Activated T-helper 2 cell treated with anti-CD3 and anti-CD28 coated beads, Interferon-gamma antibody, Interleukin-2, Interleukin-4, amounts not matched to agents 10 μg/mL and 5 μg/mL and 100 μg/mL, durations not matched to agents 14 hours and 24 hours and 36 hours (primary cell): ENCODE measurements at regions of chr14 and their contacts with region 1.

Region 1: GRCh38 chr14:89915114-89915878 is 39.2 kb downstream of the EFCAB11 start:
- DNase-seq: peak; percentile 38
- H3K4me3 Mint-ChIP-seq: no peak overlapping the region
- H3K27ac Mint-ChIP-seq: no peak overlapping the region
- H3K4me1 Mint-ChIP-seq: no peaks in the 10 kb centered on the region
- H3K27me3 Mint-ChIP-seq: peaks cover 24% of the 10 kb centered on the region

Region 2: GRCh38 chr14:88667555-88668273 is 1247.6 kb before region 1 on chr14:
- intact Hi-C with region 1: loop called (anchors 5 kb)
- DNase-seq: peak; percentile 22
- H3K4me3 Mint-ChIP-seq: no peak overlapping the region
- H3K27ac Mint-ChIP-seq: no peak overlapping the region
- H3K4me1 Mint-ChIP-seq: no peaks in the 10 kb centered on the region
- H3K27me3 Mint-ChIP-seq: no peaks in the 10 kb centered on the region

Region 3: DNA sequence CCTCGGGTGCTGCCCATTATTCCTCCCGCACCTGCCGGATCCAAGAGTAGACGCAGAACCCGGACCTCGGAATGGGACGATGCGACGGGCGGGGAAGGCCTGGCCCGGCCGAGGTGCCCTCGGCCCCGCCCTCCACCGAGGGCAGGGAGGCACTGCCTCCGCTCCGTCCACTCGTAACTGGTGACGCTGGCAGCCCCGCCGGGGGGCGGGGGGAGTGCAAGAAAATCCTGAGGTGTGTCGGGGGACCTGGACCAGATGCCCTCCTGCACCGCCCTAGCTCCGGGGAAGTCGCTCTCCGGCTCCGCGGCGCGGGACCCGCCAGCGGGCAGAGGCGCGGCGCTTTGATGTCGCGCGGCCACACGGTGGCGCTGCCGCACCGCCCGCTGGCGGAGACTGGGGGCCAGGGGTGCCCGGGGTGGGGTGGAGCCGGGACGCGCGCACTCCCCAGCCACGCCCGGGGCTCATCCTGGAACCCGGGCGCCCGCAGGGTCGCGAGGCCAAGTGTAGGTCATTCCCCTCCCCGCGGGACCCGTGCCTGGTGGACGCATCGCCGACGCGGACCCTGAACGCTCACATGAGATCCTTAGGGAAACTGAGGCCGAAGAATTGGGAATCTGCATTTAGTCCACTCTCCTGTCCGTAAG is 888.1 kb before region 1 on chr14:
- intact Hi-C with region 1: loop called (anchors 1 kb)
- DNase-seq: peak; percentile 44
- H3K4me3 Mint-ChIP-seq: peak overlapping the region; percentile 71
- H3K27ac Mint-ChIP-seq: no peak overlapping the region
- H3K4me1 Mint-ChIP-seq: no peaks in the 10 kb centered on the region
- H3K27me3 Mint-ChIP-seq: peaks cover 56% of the 10 kb centered on the region

Region 4: GRCh38 chr14:89040460-89041259 is 874.6 kb before region 1 on chr14:
- intact Hi-C with region 1: loop called (anchors 1 kb)
- DNase-seq: peak; percentile 68
- H3K4me3 Mint-ChIP-seq: peak overlapping the region; percentile 66
- H3K27ac Mint-ChIP-seq: no peak overlapping the region
- H3K4me1 Mint-ChIP-seq: peaks cover 1% of the 10 kb centered on the region
- H3K27me3 Mint-ChIP-seq: peaks cover 34% of the 10 kb centered on the region

Region 5: DNA sequence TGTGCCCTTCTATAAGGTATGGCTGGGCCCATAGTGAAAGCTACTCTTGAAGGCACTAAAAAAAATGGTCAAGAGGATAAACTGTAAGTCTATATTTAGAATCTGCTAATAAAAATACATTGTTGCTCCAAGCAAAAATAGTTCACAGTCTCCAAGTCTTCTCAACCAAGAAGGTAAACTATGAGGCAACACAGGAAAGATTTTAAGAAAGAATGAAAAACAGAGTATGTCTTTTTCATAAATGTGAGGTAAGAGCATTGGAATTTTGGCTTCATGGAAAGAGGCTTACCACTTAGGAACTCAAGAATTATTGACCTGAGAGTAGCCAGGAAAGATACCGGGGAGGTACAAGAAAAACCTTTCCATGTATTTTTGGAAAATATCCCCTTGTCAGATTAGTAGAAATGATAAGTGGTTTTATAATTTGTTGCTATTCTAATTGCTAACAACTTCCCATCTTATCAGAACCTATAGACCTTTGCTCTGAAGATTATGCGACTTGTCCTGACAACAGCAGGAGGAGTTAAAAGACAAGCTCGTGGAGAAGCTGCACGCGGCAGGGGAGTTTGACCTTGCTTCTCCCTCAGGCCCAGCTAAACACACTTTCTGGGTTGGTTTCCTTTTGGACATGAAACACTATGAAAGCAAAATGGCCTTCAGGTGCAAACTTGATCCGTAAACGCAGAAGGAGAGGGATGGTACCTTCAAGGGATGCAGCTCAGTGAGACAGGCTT is 736.3 kb before region 1 on chr14:
- intact Hi-C with region 1: loop called (anchors 2 kb)
- DNase-seq: no peak
- H3K4me3 Mint-ChIP-seq: no peak overlapping the region
- H3K27ac Mint-ChIP-seq: no peak overlapping the region
- H3K4me1 Mint-ChIP-seq: peaks cover 4% of the 10 kb centered on the region
- H3K27me3 Mint-ChIP-seq: no peaks in the 10 kb centered on the region

Region 6: GRCh38 chr14:89773644-89774316 is 141.5 kb before region 1 on chr14:
- intact Hi-C with region 1: loop called (anchors 10 kb)
- DNase-seq: peak; percentile 39
- H3K4me3 Mint-ChIP-seq: peak overlapping the region; percentile 7
- H3K27ac Mint-ChIP-seq: no peak overlapping the region
- H3K4me1 Mint-ChIP-seq: peaks cover 23% of the 10 kb centered on the region
- H3K27me3 Mint-ChIP-seq: peaks cover 10% of the 10 kb centered on the region

Region 7: DNA sequence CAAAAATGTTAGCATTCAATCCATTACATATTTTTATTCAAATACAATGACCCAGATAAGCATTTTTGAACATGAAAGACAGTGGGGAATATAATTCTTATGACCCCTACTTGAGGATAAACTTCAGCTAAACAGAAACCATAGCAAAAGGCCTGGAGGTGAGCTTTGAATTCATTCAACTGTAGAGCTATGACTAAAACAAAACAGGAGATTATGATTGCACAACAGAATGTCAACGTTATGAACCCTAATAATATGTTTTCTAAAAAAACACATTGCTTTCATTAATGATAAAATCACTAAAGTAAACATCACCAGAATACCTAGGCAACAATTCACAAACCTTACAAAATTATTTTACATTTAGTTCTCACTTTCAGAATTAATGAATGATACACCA is 11.4 kb after region 1 on chr14:
- intact Hi-C with region 1: no loop called
- DNase-seq: no peak
- H3K4me3 Mint-ChIP-seq: no peak overlapping the region
- H3K27ac Mint-ChIP-seq: no peak overlapping the region
- H3K4me1 Mint-ChIP-seq: no peaks in the 10 kb centered on the region
- H3K27me3 Mint-ChIP-seq: no peaks in the 10 kb centered on the region